Stomach (tissue), 19 donors: ENCODE measurements at regions of chr2 and their contacts with region 1.

Region 1: DNA sequence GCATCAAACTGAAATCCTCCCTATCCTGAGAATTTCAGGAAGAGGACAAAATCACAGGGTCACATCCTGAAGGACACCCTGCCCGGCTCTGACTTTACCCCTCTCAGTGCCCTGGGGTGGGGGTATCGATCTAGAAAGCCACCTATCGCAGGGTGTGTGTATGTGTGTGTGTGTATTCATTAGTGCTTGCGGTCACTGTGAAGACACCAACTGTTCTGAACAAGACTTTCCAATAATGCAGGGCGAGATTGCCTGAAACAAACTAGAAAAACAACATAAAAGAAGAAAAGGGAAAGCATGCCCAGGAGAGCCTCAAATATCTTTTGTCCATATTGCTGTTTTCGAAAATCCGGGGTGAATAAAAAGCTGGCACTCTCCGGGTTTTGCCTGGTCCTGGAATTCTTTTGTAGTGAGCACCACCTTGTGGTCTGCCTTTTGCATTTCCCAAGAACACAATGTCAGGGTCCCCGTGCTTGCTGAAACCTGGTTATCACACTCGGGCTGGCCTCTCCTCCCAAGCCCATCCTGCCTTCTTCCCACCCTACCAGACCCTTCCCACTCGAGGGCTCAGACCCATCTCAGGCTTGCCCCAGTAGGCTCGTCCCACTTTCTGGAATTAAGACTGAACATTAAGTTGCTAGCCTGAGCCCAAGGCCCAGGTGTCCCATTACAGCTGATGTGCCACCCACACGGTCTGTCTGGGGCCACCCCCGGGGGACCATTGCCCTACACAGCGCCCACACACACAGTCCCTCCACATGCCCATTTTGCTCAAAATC is 25.0 kb upstream of the COPS8 start:
- DNase-seq: peak; percentile 54 to 88
- H3K4me3 ChIP-seq: peak overlapping the region in 1 of 4 donors; percentile 12
- H3K27ac ChIP-seq: no peak overlapping the region
- H3K4me1 ChIP-seq: peaks cover 6 to 24% (median 18%) of the 10 kb centered on the region in 4 donors
- H3K27me3 ChIP-seq: no peaks in the 10 kb centered on the region
- CTCF ChIP-seq: peak in 5 of 7 experiments; percentile 32 to 75 (median 54)
- EP300 ChIP-seq: no peak
- POLR2A ChIP-seq: no peak

Region 2: GRCh38 chr2:236352761-236353593 is 707.7 kb before region 1 on chr2:
- intact Hi-C with region 1: loop called (anchors 5 kb)
- DNase-seq: peak; percentile 40 to 56
- H3K4me3 ChIP-seq: no peak overlapping the region
- H3K27ac ChIP-seq: no peak overlapping the region
- H3K4me1 ChIP-seq: peaks cover 0 to 4% (median 0%) of the 10 kb centered on the region in 4 donors
- H3K27me3 ChIP-seq: no peaks in the 10 kb centered on the region
- CTCF ChIP-seq: peak in 5 of 7 experiments; percentile 76 to 89 (median 84)
- EP300 ChIP-seq: no peak
- POLR2A ChIP-seq: no peak

Region 3: GRCh38 chr2:236512902-236513435 is 547.8 kb before region 1 on chr2:
- intact Hi-C with region 1: loop called (anchors 10 kb)
- DNase-seq: peak; percentile 69 to 73
- H3K4me3 ChIP-seq: no peak overlapping the region
- H3K27ac ChIP-seq: peak overlapping the region in 2 of 5 donors; percentile 8 to 26
- H3K4me1 ChIP-seq: peaks cover 0 to 8% (median 3%) of the 10 kb centered on the region in 4 donors
- H3K27me3 ChIP-seq: peaks cover 0 to 8% (median 0%) of the 10 kb centered on the region in 3 donors
- CTCF ChIP-seq: peak in 5 of 7 experiments; percentile 67 to 91 (median 83)
- EP300 ChIP-seq: no peak
- POLR2A ChIP-seq: no peak